ENCODE measurements at regions of chr16 and their contacts with region 1.

Region 1: DNA sequence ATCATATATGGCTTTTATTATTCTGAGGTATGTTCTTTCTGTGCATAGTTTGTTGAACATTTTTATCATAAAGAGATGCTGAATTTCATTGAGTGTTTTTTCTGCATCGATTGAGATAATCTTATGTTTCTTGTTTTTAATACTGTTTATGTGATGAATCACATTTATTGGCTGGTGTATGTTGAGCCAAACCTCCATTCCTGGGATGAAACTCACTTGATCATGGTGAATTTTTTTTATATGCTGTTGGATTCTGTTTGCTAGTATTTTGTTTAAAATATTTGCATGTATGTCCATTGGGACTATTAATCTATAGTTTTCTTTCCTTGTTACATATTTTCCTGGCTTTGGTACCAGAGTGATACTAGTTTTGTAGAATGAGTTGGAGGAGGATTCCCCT is 500.2 kb downstream of the CDH11 start:
- DNase-seq: no peak
- H3K4me3 Mint-ChIP-seq: no peak overlapping the region
- H3K27ac Mint-ChIP-seq: no peak overlapping the region
- H3K4me1 Mint-ChIP-seq: no peaks in the 10 kb centered on the region
- H3K27me3 Mint-ChIP-seq: no peaks in the 10 kb centered on the region

Region 2: DNA sequence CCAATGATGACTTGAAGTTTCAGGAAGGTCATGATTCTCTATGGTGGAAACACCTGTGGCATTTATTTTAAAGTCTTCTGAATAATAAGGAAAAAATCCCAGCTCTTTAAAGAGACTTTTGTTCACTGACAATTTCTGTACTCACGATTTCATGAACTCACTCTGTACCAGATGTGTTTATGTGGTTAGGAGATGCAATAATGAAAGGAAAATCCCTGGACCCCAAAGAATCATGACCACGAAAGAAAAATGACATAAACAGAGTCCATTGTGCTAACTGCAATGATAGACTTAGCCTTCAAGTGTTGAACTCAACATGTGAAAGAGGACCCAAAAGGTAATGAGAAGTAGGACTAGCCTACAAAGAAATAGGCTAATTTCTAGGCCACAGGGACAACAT is 447.3 kb before region 1 on chr16:
- intact Hi-C with region 1: loop called (anchors 5 kb)
- DNase-seq: no peak
- H3K4me3 Mint-ChIP-seq: no peak overlapping the region
- H3K27ac Mint-ChIP-seq: no peak overlapping the region
- H3K4me1 Mint-ChIP-seq: no peaks in the 10 kb centered on the region
- H3K27me3 Mint-ChIP-seq: no peaks in the 10 kb centered on the region

Region 3: GRCh38 chr16:64455254-64455653 is 166.4 kb before region 1 on chr16:
- intact Hi-C with region 1: no loop called
- DNase-seq: no peak
- H3K4me3 Mint-ChIP-seq: no peak overlapping the region
- H3K27ac Mint-ChIP-seq: no peak overlapping the region
- H3K4me1 Mint-ChIP-seq: no peaks in the 10 kb centered on the region
- H3K27me3 Mint-ChIP-seq: no peaks in the 10 kb centered on the region

Region 4: DNA sequence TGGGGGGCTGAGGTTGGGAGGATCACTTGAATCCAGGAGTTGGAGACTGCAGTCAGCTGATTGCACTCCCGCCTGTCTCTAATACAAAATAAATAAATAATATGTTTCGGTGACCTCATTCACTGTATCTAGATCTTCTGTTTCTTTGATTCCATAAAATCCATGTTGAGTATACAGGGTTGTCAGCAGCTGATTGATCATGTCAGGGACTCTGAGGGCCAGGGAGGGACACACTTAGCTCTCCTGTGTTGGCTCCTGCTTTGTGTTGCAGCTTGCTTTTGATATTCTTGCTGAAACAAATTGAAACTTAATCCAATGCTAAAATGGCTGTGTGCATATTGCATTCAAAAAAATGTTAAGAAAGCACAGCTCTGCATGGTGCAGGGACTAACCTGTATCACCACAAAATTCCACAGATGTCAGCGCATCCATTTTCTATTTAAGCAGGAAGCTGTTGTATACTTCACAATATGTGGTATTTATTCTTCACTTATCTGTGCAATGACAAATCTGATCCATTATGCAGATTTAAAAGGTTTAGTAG is 45.8 kb after region 1 on chr16:
- intact Hi-C with region 1: no loop called
- DNase-seq: no peak
- H3K4me3 Mint-ChIP-seq: no peak overlapping the region
- H3K27ac Mint-ChIP-seq: no peak overlapping the region
- H3K4me1 Mint-ChIP-seq: no peaks in the 10 kb centered on the region
- H3K27me3 Mint-ChIP-seq: no peaks in the 10 kb centered on the region